ENCODE measurements at regions of chr6 and their contacts with region 1.

Region 1: GRCh38 chr6:3919130-3919628 is 70.0 kb downstream of the FAM50B start:
- DNase-seq: no peak
- H3K4me3 Mint-ChIP-seq: no peak overlapping the region
- H3K27ac Mint-ChIP-seq: no peak overlapping the region
- H3K4me1 Mint-ChIP-seq: peaks cover 19% of the 10 kb centered on the region
- H3K27me3 Mint-ChIP-seq: peaks cover 7% of the 10 kb centered on the region

Region 2: DNA sequence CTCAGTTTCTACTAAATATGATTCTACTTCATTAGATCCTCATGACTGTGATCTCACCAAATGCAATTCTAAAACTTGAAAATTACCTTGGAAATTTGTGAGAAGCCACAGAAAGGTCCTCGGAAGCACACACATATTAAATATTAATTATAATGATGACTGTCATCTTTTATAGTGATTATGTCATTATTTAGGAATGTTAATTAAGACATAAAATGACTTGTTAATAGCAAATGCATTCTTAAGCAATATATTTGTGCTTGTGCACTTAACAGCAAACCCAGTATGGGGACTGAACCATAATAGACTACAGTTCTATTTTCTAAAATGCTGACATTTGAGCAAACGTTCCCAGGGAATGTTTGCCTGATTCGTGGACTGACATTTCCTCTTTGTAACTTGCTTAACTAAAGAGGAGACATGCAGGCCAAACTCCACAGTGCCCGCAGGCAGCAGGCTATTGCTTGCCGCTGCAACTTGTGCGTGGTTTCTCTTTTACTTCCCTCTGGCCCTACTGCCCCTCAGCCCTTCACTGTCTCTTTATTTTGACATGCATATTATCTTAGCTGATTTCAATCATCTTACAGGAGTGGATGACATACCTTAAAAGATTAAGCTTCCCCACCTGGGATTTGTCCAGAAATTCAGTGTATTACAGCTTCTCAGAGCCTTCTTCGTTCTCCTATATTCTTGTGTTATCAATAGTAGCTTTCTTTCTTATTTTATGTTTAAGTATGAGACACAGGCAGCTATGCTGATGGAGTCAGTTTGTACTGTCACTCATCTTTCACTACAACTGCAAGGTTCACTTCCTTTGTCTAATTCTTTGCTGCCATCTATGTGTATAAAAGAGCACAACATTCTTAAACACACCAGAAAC is 1815.3 kb before region 1 on chr6:
- CTCF ChIA-PET with region 1: no interaction called
- POLR2A ChIA-PET with region 1: no interaction called
- intact Hi-C with region 1: no loop called
- DNase-seq: no peak
- H3K4me3 Mint-ChIP-seq: no peak overlapping the region
- H3K27ac Mint-ChIP-seq: no peak overlapping the region
- H3K4me1 Mint-ChIP-seq: no peaks in the 10 kb centered on the region
- H3K27me3 Mint-ChIP-seq: peaks cover 2% of the 10 kb centered on the region

Region 3: GRCh38 chr6:3868544-3868943 is 50.6 kb before region 1 on chr6:
- CTCF ChIA-PET with region 1: no interaction called
- POLR2A ChIA-PET with region 1: no interaction called
- intact Hi-C with region 1: loop called (anchors 1 kb)
- DNase-seq: no peak
- H3K4me3 Mint-ChIP-seq: peak overlapping the region; percentile 24
- H3K27ac Mint-ChIP-seq: peak overlapping the region; percentile 92
- H3K4me1 Mint-ChIP-seq: peaks cover 45% of the 10 kb centered on the region
- H3K27me3 Mint-ChIP-seq: peaks cover 8% of the 10 kb centered on the region

Region 4: DNA sequence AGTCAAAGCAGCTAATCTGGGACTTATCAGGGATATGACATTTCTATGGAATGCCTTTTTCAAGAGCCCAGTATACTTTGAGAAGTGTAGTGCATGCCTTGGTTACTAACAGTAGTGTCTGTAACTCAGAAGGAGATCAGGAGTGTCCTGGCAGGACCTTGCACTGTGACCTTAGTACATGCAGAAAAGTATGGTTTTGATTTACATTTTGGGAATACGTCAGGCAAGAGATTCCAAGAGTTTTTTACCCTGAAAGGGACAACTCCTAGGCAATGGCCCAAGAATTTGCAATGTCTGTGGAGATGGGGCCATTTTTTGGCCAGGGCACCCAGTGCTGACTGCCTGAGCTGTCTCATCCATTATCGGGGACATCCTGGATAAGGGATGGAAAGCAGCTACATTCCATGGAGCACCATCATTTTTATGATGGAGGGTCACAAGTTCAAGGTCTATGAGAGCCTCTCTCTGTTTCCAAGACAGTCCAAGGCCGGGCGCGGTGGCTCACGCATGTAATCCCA is 10.2 kb after region 1 on chr6:
- CTCF ChIA-PET with region 1: interaction called, 13 read pairs
- POLR2A ChIA-PET with region 1: no interaction called
- intact Hi-C with region 1: no loop called
- DNase-seq: no peak
- H3K4me3 Mint-ChIP-seq: no peak overlapping the region
- H3K27ac Mint-ChIP-seq: no peak overlapping the region
- H3K4me1 Mint-ChIP-seq: no peaks in the 10 kb centered on the region
- H3K27me3 Mint-ChIP-seq: no peaks in the 10 kb centered on the region

Measured in activated CD4-positive, alpha-beta memory T cell treated with anti-CD3 and anti-CD28 coated beads for 36 hours (primary cell).